Right ventricle myocardium inferior (tissue), 1 donor: ENCODE measurements at regions of chr3 and their contacts with region 1.

Region 1: GRCh38 chr3:132343018-132343612 is 25.9 kb downstream of the ACP3 start:
- DNase-seq: no peak
- ATAC-seq: peak; percentile 50

Region 2: DNA sequence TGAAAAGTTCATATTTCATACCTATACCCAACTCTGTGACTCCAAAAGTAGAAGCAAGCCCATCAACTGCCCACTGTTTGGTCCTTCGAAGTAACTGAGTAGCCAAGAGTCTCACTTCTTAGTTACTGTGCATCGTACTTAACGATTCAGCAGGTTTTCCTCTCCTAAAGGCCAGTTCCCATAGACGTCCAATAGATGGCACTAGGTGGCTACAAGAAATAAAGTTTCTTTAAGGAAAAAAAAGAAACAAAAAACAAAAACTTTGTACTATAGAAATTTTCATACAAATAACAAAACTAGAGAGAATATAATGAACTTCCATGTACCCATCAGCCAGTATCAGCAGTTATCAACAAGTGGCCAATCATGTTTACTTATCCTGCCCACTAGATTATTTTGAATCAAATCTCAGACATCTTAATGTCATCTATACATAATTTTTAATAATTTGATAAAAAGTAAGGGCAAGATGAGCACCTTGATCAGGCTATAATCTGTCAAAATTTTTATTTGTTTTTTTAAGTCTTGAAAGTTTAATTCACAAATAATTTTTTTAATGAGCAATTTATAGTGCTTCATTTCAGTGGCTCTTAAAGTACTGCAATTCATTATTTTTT is 89.7 kb before region 1 on chr3:
- intact Hi-C with region 1: loop called (anchors 1 kb)
- DNase-seq: no peak
- ATAC-seq: no peak